Activated CD4-positive, alpha-beta memory T cell treated with anti-CD3 and anti-CD28 coated beads for 36 hours (primary cell): ENCODE measurements at regions of chr11 and their contacts with region 1.

Region 1: GRCh38 chr11:1882519-1883238 is 9.0 kb downstream of the PRR33 start:
- DNase-seq: peak; percentile 82
- H3K4me3 Mint-ChIP-seq: no peak overlapping the region
- H3K27ac Mint-ChIP-seq: no peak overlapping the region
- H3K4me1 Mint-ChIP-seq: no peaks in the 10 kb centered on the region
- H3K27me3 Mint-ChIP-seq: no peaks in the 10 kb centered on the region

Region 2: DNA sequence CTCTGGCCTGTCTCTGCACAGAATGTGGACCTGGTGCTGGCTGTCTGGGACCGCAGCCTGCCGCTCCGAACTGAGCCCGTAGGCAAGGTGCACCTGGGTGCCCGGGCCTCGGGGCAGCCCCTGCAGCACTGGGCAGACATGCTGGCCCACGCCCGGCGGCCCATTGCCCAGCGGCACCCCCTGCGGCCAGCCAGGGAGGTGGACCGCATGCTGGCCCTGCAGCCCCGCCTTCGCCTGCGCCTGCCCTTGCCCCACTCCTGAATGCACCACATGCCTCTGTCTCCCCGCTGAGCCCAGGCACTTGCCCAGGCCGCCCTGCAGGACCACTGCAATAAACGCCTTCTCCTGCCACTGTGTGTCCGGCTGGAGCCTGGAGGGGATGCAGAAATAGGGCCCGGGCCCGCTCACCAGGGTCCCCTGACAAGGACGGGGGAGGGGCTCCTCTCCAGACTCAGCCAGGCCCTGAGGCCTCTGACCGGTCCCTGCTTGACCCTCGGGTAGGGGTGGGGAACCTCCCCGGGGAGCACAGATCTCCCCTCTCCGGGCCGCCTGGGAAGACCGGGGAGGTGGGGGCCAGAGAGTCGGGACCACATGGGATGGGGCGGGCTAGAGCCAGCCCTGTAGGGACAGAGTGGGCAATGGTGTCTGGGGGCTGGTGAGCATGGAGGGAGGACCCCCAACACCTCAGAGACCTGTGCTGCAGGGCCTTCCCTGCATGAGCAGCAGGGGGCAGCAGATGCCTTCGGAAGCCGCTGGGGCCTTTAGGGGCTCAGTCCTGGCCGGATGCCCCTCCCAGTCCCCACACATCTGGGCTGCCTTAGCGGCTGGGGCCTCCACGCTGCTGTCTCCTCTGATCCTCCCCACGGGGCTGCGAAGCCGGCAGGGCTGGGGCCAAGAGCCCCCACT is 45.3 kb before region 1 on chr11:
- CTCF ChIA-PET with region 1: interaction called, 16 read pairs
- POLR2A ChIA-PET with region 1: no interaction called
- intact Hi-C with region 1: no loop called
- DNase-seq: peak; percentile 83
- H3K4me3 Mint-ChIP-seq: no peak overlapping the region
- H3K27ac Mint-ChIP-seq: no peak overlapping the region
- H3K4me1 Mint-ChIP-seq: peaks cover 5% of the 10 kb centered on the region
- H3K27me3 Mint-ChIP-seq: peaks cover 3% of the 10 kb centered on the region

Region 3: GRCh38 chr11:1852877-1853276 is 29.8 kb before region 1 on chr11 and contains the start of gene LSP1:
- CTCF ChIA-PET with region 1: interaction called, 19 read pairs
- POLR2A ChIA-PET with region 1: interaction called, 3 read pairs
- intact Hi-C with region 1: no loop called
- DNase-seq: peak; percentile 93
- H3K4me3 Mint-ChIP-seq: peak within 1 kb of the TSS; percentile 92
- H3K27ac Mint-ChIP-seq: peak within 1 kb of the TSS; percentile 97
- H3K4me1 Mint-ChIP-seq: peaks cover 66% of the 10 kb centered on the region
- H3K27me3 Mint-ChIP-seq: no peaks in the 10 kb centered on the region
- total RNA-seq, gene LSP1: 179 to 181 TPM

Region 4: DNA sequence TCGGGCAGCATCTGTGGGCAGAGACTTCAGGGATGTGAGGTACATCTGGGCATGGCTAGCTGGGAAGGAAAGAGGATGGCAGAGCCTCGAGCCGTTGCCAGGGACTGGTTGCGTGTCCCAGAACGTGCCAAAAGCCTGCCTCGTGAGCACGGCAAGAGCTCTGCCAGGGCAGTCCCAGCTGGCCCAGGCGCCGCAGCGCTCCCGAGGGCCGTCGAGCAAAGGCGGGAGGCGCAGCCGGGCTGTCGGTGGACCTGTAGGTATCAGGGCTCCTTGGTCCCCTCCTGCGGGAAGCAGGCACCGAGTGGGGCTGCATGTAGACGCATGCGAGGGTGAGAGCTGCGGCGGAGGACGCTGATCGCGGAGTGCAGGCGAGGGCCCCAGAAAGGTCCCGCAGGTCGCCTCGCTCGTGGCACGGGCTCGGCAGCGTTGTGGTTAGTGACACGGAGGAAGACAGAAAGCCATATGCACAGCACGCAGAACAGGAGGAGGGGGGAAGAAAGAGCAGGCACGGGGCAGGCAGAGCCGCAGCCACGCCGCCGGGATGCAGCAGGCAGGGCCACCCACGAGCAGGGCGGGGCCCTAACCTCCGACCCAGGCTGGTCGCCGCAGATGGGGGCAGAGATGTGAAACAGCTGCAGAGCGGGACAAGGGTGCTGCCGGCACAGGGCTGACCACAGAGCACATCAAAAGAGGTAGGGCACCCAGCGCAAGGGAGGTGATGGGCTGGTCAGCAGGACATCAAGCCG is 11.8 kb before region 1 on chr11:
- CTCF ChIA-PET with region 1: interaction called, 18 read pairs
- POLR2A ChIA-PET with region 1: no interaction called
- intact Hi-C with region 1: no loop called
- DNase-seq: peak; percentile 51
- H3K4me3 Mint-ChIP-seq: peak overlapping the region; percentile 13
- H3K27ac Mint-ChIP-seq: no peak overlapping the region
- H3K4me1 Mint-ChIP-seq: peaks cover 50% of the 10 kb centered on the region
- H3K27me3 Mint-ChIP-seq: no peaks in the 10 kb centered on the region

Region 5: DNA sequence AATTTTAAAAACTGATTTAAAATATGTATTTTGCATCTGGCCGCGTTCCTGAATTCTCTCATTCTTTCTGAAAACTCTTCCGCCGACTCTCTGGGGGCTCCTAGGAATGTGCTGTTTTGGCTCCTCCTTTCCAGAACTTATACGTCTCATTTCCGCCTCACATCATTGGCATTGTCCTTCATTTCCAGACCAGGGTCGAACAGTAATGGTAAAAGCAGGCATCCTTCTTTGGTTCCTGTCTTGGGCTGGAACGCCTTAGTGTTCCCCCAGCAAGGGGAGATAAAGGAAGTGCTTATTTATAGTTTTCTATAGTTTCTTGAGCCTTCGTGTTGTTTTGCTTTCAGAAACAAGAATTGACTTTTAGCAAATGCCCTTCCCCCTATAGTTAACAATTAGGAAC is 25.9 kb after region 1 on chr11:
- CTCF ChIA-PET with region 1: interaction called, 14 read pairs
- POLR2A ChIA-PET with region 1: no interaction called
- intact Hi-C with region 1: no loop called
- DNase-seq: no peak
- H3K4me3 Mint-ChIP-seq: no peak overlapping the region
- H3K27ac Mint-ChIP-seq: no peak overlapping the region
- H3K4me1 Mint-ChIP-seq: no peaks in the 10 kb centered on the region
- H3K27me3 Mint-ChIP-seq: peaks cover 2% of the 10 kb centered on the region

Region 6: DNA sequence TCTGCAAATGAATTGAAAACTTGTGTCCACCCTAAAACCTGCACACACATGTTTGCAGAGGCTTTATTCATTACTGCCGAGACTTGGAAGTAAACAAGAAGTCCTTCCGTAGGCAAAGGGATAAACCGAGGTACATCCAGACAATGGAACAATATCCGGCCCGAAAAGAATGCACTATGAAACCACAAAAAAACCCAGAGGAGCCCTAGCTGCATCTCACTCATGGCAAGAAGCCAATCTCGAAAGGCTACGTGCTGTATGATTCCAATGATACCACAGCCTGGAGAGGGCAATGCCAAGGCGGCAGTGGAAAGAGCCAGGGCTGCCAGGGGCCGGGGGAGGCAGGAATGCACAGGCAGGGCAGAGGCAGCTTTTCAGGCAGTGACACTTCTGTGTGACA is 61.3 kb after region 1 on chr11:
- CTCF ChIA-PET with region 1: interaction called, 26 read pairs
- POLR2A ChIA-PET with region 1: no interaction called
- intact Hi-C with region 1: no loop called
- DNase-seq: no peak
- H3K4me3 Mint-ChIP-seq: no peak overlapping the region
- H3K27ac Mint-ChIP-seq: no peak overlapping the region
- H3K4me1 Mint-ChIP-seq: peaks cover 3% of the 10 kb centered on the region
- H3K27me3 Mint-ChIP-seq: no peaks in the 10 kb centered on the region